A673 (cell line): ENCODE measurements at regions of chrX and their contacts with region 1.

Region 1: GRCh38 chrX:76279000-76279399 is 106.1 kb downstream of the PBDC1 start:
- DNase-seq: peak; percentile 64
- H3K4me3 ChIP-seq: no peak overlapping the region
- H3K27ac ChIP-seq: no peak overlapping the region
- H3K4me1 ChIP-seq: no peaks in the 10 kb centered on the region
- H3K27me3 ChIP-seq: no peaks in the 10 kb centered on the region
- CTCF ChIP-seq: peak; percentile 76

Region 2: DNA sequence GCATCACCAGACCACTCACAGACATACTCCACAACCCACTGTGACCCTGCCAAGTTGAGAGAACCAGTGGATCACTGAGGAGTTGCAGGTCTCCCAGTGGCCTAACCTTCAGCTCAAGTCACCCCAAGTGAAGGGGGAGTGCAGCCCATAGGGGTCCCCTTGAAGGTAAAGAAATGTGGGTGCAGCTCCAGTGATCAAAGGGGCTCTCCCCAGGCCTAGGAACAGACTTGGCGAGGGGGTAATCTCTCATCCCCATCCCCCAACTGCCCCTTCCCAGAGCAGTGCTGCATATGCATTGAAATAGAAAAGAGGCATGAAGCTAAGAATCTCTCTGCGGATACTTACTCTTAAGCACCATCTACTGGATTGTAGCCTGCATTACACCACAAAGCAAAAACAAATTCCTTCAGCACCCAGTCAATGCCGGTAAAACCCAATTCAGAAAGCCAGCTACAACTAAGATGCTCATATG is 175.5 kb after region 1 on chrX:
- CTCF ChIA-PET with region 1: interaction called, 5 read pairs
- POLR2A ChIA-PET with region 1: no interaction called
- intact Hi-C with region 1: loop called (anchors 1 kb)
- DNase-seq: peak; percentile 24
- H3K4me3 ChIP-seq: no peak overlapping the region
- H3K27ac ChIP-seq: no peak overlapping the region
- H3K4me1 ChIP-seq: no peaks in the 10 kb centered on the region
- H3K27me3 ChIP-seq: no peaks in the 10 kb centered on the region
- CTCF ChIP-seq: peak; percentile 54

Region 3: DNA sequence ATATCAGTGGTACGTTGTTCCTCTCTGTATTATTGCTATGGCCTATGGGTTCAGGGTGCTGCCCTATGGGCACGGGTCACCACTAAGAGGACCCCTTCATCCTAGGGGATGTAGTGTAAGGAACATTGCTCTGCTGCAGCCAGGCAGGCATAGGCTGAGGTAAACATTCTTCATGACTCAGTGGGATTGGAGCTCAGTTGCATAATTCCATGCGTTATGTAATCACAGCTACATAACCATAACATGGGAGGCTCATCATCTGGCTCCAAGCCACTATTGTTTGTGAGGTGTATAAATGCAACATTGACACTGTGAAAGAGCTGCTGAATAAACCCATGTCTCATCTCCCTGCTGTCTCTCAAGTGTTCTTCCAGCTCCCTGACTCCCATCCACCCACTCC is 523.7 kb after region 1 on chrX:
- CTCF ChIA-PET with region 1: no interaction called
- POLR2A ChIA-PET with region 1: no interaction called
- intact Hi-C with region 1: no loop called
- DNase-seq: no peak
- H3K4me3 ChIP-seq: no peak overlapping the region
- H3K27ac ChIP-seq: no peak overlapping the region
- H3K4me1 ChIP-seq: no peaks in the 10 kb centered on the region
- H3K27me3 ChIP-seq: no peaks in the 10 kb centered on the region
- CTCF ChIP-seq: no peak

Region 4: DNA sequence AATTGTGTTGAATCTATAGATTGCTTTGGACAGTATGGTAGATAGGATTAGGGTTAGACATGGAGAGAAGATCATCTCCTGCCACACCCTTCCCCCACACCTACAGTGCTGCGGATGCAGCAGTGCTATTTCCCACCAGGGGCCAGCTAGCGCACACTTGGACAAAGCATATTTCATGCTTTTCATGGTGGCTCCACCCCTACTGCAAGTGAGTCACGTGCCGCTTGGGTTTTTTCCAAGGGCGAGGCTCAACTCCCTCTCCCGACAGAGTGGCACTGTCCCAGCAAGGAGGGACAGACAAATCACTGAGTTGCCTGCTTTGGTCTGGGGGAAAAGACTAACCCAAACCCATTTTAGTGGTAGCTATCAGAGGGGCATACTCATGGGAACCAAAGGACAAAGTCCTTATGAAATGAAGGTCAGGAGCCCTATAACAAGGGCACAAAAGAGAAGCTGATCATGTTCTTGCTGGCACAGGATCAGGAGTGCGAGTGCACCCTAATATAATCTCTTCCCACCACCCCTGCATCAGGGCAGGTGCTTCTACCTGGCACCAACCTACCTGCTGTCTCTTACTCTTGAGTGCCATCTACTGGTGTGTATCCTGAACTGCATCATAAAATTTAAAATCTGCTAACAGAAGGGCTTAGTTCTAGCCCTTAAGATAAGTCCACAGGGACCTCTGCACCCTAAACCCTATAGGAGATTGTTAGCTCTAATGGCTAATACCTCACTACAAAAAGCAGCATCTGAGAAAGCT is 1745.5 kb after region 1 on chrX:
- CTCF ChIA-PET with region 1: interaction called, 3 read pairs
- POLR2A ChIA-PET with region 1: no interaction called
- intact Hi-C with region 1: loop called (anchors 2 kb)
- DNase-seq: peak; percentile 42
- H3K4me3 ChIP-seq: no peak overlapping the region
- H3K27ac ChIP-seq: no peak overlapping the region
- H3K4me1 ChIP-seq: no peaks in the 10 kb centered on the region
- H3K27me3 ChIP-seq: no peaks in the 10 kb centered on the region
- CTCF ChIP-seq: peak; percentile 70